WTC11 (cell line): ENCODE measurements at regions of chr10 and their contacts with region 1.

Region 1: DNA sequence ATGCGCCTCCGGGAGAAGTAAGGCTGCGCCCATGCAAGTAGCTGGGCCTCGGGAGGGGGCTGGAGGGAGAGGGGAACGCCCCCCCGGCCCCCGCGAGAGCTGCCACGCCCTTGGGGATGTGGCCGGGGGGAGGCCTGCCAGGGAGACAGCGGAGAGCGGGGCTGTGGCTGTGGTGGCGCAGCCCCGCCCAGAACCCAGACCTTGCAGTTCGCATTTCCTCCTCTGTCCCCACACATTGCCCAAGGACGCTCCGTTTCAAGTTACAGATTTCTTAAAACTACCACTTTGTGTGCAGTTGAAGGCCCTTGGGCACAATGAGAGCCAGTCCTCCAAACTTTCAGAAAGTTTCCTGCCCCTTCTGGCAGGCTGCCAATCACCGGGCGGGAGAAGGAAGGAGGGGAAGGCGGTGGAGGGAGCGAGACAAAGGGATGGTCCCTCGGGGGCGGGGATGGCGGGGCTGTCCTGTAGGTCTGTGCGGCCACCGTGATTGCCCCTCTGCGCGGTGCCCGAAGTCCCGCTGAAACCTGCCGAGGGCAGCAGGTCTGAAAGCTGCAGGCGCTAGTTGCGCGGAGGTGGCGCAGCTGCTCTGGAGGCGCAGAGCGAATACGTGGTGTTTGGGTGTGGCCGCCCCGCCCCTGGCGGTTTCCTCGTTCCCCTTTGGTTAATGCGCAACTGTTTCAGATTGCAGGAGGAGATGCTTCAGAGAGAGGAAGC is 2.1 kb downstream of the VIM start:
- DNase-seq: peak; percentile 87
- ATAC-seq: peak; percentile 70
- H3K4me3 Mint-ChIP-seq: peak overlapping the region; percentile 93
- H3K27ac Mint-ChIP-seq: peak overlapping the region; percentile 93
- H3K4me1 Mint-ChIP-seq: peaks cover 24% of the 10 kb centered on the region
- H3K27me3 Mint-ChIP-seq: peaks cover 52% of the 10 kb centered on the region
- CTCF ChIP-seq: no peak; the same call in 1 of the 2 replicates

Region 2: DNA sequence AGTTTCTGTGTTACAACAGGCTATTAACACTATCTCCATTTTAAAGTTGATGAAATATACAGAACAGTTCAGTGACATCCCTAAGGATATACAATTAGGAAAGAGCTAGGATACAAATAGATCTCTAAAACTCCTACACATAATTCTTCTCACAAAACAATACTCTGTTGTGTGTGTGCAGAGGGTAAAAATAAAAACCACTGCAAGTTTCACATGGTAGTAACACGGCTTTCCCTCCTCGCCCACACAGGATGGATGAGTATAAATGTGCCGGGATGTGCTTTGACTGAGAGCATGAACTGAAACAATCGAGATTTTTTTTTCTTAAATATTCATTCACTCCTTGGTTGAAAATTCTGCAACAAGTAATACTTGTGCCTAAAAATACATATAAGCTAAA is 576.9 kb before region 1 on chr10:
- CTCF ChIA-PET with region 1: no interaction called
- POLR2A ChIA-PET with region 1: no interaction called
- DNase-seq: no peak
- ATAC-seq: no peak
- H3K4me3 Mint-ChIP-seq: no peak overlapping the region
- H3K27ac Mint-ChIP-seq: no peak overlapping the region
- H3K4me1 Mint-ChIP-seq: peaks cover 3% of the 10 kb centered on the region; the same call in 1 of the 2 replicates
- H3K27me3 Mint-ChIP-seq: no peaks in the 10 kb centered on the region
- CTCF ChIP-seq: no peak

Region 3: DNA sequence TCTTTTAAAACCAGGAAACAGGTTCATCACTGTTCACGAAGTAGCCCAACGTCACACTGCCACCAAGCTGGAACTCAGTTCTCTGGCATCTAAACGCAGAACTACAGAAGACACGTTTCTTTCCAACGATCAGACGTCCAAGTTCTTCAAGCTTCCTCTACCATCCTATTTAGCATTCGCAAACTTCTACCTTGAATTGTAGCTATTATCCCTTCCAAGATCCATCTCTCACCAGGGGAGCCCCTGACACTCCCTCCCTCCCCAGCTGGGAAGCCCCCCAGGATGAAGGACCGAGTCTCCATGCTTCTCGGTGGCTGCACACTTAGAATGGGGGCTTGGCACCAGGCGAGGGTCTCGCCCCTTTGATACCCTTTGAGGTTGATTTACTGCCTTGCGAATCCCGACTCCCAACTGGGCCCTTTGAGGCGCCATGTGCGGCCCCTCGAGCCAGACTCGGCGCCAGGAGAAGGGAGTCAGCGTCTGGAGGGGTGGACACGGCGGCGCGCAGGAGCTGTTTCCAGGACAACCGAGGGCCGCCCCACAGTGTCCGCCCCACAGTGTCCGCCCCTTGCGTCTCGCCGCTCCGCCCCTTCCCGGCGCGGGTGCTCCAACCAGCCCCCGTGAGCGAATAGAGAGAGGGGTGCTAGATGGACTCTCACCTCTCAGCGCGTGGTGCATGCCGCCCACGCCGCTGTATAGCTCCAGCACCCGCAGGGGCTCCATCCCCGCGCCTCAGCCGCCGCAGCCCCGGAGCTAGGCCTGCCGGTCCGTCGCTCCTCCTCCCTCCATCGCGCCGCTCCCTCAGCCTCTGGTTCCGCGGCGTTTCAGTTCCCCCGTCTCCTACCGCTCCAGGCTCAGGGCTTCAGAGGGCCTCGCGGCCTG is 29.0 kb before region 1 on chr10 and contains the start of gene TRDMT1:
- CTCF ChIA-PET with region 1: interaction called, 20 read pairs
- POLR2A ChIA-PET with region 1: interaction called, 6 read pairs
- DNase-seq: peak; percentile 80
- ATAC-seq: peak; percentile 93
- H3K4me3 Mint-ChIP-seq: peak within 1 kb of the TSS; percentile 83
- H3K27ac Mint-ChIP-seq: peak within 1 kb of the TSS; percentile 89
- H3K4me1 Mint-ChIP-seq: peaks cover 54% of the 10 kb centered on the region
- H3K27me3 Mint-ChIP-seq: no peaks in the 10 kb centered on the region
- CTCF ChIP-seq: no peak
- total RNA-seq, gene TRDMT1: 10.6 to 11.7 TPM (median 11.0 TPM) in 3 replicates

Region 4: DNA sequence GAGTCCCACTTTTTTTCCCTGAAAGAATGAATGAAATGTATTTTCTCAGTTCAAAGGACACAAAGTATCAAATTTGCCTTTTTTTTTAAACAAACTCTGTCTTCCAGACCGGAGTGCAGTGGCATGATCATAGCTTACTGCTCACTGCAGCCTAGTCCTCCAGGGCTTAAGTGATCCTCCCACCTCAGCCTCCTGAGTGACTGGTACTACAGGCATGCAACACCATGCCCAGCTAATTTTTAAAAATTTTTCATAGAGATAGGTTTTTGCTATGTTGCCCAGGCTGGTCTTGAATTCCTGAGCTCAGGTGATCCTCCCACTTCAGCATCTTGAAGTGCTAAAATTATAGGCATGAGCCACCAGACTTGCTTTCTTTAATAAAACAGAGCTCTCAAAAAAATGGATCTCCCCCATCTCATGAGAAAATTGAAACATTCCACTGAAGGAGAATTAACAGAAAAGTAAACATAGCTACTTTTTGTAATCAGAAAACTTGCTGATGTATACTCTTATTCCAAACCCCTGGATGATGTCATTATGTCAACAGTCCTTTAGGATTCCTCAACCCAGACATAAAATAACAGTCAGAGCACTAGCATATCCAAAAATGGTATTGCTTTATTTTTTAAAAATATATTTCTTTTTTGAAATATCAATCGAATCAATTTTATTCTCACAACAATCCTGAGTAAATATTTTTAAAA is 16.3 kb before region 1 on chr10:
- CTCF ChIA-PET with region 1: interaction called, 14 read pairs
- POLR2A ChIA-PET with region 1: no interaction called
- DNase-seq: no peak
- ATAC-seq: no peak
- H3K4me3 Mint-ChIP-seq: no peak overlapping the region
- H3K27ac Mint-ChIP-seq: no peak overlapping the region
- H3K4me1 Mint-ChIP-seq: peaks cover 29% of the 10 kb centered on the region
- H3K27me3 Mint-ChIP-seq: no peaks in the 10 kb centered on the region
- CTCF ChIP-seq: no peak

Region 5: DNA sequence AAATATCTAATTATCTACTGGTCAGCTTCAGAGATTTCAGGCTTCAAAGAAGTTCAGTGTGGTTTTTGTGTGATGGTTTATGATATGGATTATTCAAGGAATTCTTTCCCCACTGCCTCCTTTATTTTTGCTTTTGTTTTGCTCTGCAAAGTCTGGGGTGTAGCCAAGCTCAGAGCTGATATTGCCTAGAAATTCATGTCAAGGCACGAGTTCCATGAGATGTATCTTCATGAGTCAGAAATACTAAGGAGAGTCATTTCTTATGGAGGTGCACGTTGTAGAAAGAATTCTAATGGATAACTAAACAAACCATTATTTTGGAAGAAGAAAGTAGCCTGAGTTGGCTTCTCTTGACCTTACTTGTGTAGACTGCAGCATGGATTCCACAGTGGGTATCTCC is 35.3 kb after region 1 on chr10:
- CTCF ChIA-PET with region 1: no interaction called
- POLR2A ChIA-PET with region 1: no interaction called
- DNase-seq: no peak
- ATAC-seq: no peak
- H3K4me3 Mint-ChIP-seq: no peak overlapping the region
- H3K27ac Mint-ChIP-seq: no peak overlapping the region
- H3K4me1 Mint-ChIP-seq: peaks cover 7% of the 10 kb centered on the region
- H3K27me3 Mint-ChIP-seq: peaks cover 6% of the 10 kb centered on the region; the same call in 1 of the 2 replicates
- CTCF ChIP-seq: no peak

Region 6: DNA sequence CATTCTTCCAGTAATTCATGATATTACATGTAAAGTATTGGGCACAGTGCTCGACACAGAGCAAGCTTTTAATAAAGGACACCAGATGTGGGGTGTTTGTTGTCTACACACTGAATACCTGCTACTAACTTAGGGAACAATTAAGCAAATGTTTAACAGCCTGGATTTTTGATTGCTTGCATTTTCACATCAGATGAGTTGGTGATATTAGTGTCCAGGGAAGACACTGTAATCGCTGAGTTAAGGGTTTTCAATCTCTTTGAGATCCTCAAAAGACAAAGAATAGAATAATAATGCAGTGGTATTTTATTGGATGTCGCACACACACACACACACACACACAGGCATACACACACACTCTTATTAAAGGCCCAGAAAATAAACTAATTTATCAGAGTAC is 77.0 kb after region 1 on chr10:
- CTCF ChIA-PET with region 1: no interaction called
- POLR2A ChIA-PET with region 1: no interaction called
- DNase-seq: no peak
- ATAC-seq: no peak
- H3K4me3 Mint-ChIP-seq: no peak overlapping the region
- H3K27ac Mint-ChIP-seq: no peak overlapping the region
- H3K4me1 Mint-ChIP-seq: no peaks in the 10 kb centered on the region
- H3K27me3 Mint-ChIP-seq: no peaks in the 10 kb centered on the region
- CTCF ChIP-seq: no peak

Region 7: DNA sequence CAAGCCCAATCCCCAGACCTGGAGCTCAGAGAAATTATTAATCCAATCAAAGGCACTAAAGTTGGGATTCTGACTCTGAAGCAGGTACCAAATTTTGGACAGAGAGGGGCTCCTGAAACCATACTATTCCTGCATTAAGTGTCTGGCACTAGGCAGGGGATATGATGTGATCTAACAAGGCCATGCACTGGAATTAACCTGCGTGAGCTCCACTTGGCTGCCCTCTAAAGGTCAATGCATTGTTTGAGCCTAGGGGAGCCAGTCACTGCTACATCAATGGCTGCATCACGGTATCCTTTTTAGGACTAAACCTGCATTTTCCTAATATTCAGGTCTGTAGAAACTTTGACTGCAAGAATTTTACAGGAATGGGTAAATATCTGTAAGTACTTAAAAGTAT is 182.2 kb after region 1 on chr10:
- CTCF ChIA-PET with region 1: no interaction called
- POLR2A ChIA-PET with region 1: no interaction called
- DNase-seq: peak; percentile 36
- ATAC-seq: peak; percentile 94
- H3K4me3 Mint-ChIP-seq: no peak overlapping the region
- H3K27ac Mint-ChIP-seq: peak overlapping the region; percentile 5; the same call in 1 of the 2 replicates
- H3K4me1 Mint-ChIP-seq: peaks cover 16% of the 10 kb centered on the region
- H3K27me3 Mint-ChIP-seq: no peaks in the 10 kb centered on the region
- CTCF ChIP-seq: no peak